Naive thymus-derived CD4-positive, alpha-beta T cell (primary cell): ENCODE measurements at regions of chr1 and their contacts with region 1.

Region 1: GRCh38 chr1:151165738-151166505 is at the starts of genes LYSMD1 and SCNM1:
- DNase-seq: peak; percentile 78 to 98 (median 97)
- ATAC-seq: peak; percentile 98
- H3K4me3 ChIP-seq: peak within 1 kb of the TSS; percentile 97
- H3K4me3 Mint-ChIP-seq: peak within 1 kb of the TSS; percentile 87 to 99 (median 95)
- H3K27ac ChIP-seq: peak within 1 kb of the TSS; percentile 71
- H3K27ac Mint-ChIP-seq: peak within 1 kb of the TSS; percentile 90 to 99 (median 97)
- H3K4me1 ChIP-seq: peaks cover 18 to 19% of the 10 kb centered on the region in 2 donors
- H3K4me1 Mint-ChIP-seq: peaks cover 30 to 70% (median 52%) of the 10 kb centered on the region in 7 donors
- H3K27me3 ChIP-seq: no peaks in the 10 kb centered on the region
- H3K27me3 Mint-ChIP-seq: peaks cover 0 to 3% (median 0%) of the 10 kb centered on the region in 5 donors
- total RNA-seq, gene LYSMD1: 1.4 to 3.3 (median 2.3) TPM
- total RNA-seq, gene SCNM1: 37.1 to 73.1 (median 57.1) TPM

Region 2: GRCh38 chr1:150352866-150353265 is 813.1 kb before region 1 on chr1:
- CTCF ChIA-PET with region 1: no interaction called
- POLR2A ChIA-PET with region 1: no interaction called
- intact Hi-C with region 1: no loop called
- DNase-seq: no peak
- ATAC-seq: no peak
- H3K4me3 ChIP-seq: no peak overlapping the region
- H3K4me3 Mint-ChIP-seq: no peak overlapping the region
- H3K27ac ChIP-seq: no peak overlapping the region
- H3K27ac Mint-ChIP-seq: peak overlapping the region in 3 of 9 donors; percentile 3 to 47 (median 26)
- H3K4me1 ChIP-seq: no peaks in the 10 kb centered on the region
- H3K4me1 Mint-ChIP-seq: no peaks in the 10 kb centered on the region
- H3K27me3 ChIP-seq: no peaks in the 10 kb centered on the region
- H3K27me3 Mint-ChIP-seq: no peaks in the 10 kb centered on the region

Region 3: DNA sequence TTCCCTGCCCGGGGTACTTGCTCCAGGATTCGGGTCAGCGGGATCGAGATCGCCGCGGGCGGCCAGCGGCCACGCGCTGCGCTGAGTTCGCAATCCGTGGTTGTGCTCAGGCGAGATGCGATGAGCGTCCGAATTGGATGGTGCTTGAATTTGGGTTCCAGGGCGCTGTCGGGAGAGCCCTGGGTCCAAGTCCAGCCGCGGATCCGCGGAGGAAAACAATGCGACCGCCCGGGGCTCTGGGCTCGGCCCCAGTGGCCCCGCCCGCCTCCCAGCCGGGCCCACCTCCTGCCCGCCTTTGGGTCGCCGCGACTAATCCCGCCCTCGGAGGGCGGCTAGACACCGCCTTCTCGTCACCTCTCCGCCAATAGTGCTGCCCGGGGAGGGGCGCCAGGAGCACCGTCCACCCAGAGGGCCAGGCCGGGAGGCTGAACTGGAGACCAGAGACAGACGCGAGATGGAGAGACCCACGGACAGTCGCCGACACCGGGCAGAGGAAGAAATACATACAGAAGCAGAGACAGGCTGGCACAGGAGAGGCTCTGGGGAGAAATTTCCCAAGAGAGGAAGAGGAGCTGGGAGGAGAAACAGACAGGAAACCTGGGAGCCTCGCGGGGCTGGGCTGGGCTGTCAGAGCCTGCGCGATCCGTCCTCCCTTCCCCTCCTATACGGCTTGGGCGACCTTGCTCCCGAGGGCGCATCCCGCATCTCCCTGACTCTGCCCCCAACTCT is 19.3 kb before region 1 on chr1 and contains the start of gene SEMA6C:
- CTCF ChIA-PET with region 1: no interaction called
- POLR2A ChIA-PET with region 1: interaction called, 4 read pairs
- intact Hi-C with region 1: loop called in 1 of 2 experiments (anchors 1 kb)
- DNase-seq: peak; percentile 70 to 92 (median 78)
- ATAC-seq: peak; percentile 100
- H3K4me3 ChIP-seq: peak within 1 kb of the TSS; percentile 66
- H3K4me3 Mint-ChIP-seq: peak within 1 kb of the TSS; percentile 91 to 99 (median 98)
- H3K27ac ChIP-seq: peak within 1 kb of the TSS; percentile 67
- H3K27ac Mint-ChIP-seq: peak within 1 kb of the TSS; percentile 66 to 94 (median 87)
- H3K4me1 ChIP-seq: no peaks in the 10 kb centered on the region
- H3K4me1 Mint-ChIP-seq: peaks cover 12 to 24% (median 22%) of the 10 kb centered on the region in 7 donors
- H3K27me3 ChIP-seq: no peaks in the 10 kb centered on the region
- H3K27me3 Mint-ChIP-seq: peaks cover 0 to 23% (median 0%) of the 10 kb centered on the region in 5 donors
- total RNA-seq, gene SEMA6C: 2.5 to 12.4 (median 4.7) TPM

Region 4: DNA sequence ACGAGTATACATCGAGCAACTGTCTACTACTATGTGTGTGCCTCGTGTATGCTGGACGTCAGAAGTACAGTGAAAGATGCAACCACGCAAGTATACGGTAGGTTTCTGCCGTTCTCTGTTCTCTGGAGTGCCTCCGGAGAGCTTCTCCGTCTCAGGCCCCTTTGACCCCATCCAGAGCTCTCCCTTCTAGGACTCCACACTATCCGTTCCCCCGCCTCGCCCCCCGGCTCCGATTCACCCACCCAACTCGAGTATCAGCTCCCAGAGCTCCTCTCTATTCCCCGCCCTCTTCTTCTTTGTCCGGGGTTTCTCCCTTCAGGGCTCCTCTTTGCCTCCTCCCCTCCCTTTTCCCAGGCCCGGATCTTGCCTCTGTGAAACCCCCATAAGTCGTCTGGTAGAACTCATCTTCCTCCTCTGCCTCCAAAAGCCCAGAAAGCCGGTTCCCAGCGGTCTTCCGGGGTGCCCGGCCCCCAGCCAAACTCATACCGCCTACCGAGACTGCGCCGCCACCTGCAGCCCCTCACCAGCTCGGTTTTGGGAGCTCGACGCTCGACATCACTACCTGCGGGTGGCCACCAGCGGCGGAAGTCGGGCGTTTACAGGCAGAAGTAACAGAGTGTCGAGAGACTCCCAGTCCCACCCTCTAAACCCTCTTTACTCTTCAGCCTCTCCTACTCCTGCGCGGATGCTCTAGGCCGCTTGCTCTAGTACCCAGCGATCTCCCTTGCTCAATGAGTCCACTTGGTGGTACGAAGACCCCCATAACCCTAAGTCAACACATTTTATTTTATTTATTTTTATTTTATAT is 23.9 kb after region 1 on chr1 and contains the start of gene VPS72:
- CTCF ChIA-PET with region 1: interaction called, 5 read pairs
- POLR2A ChIA-PET with region 1: interaction called, 33 read pairs
- intact Hi-C with region 1: loop called (anchors 1 kb)
- DNase-seq: peak; percentile 57 to 90 (median 85)
- ATAC-seq: peak; percentile 98
- H3K4me3 ChIP-seq: peak within 1 kb of the TSS; percentile 80
- H3K4me3 Mint-ChIP-seq: peak within 1 kb of the TSS; percentile 91 to 99 (median 98)
- H3K27ac ChIP-seq: peak within 1 kb of the TSS; percentile 78
- H3K27ac Mint-ChIP-seq: peak within 1 kb of the TSS; percentile 91 to 98 (median 97)
- H3K4me1 ChIP-seq: peaks cover 16% of the 10 kb centered on the region in 2 donors
- H3K4me1 Mint-ChIP-seq: peaks cover 23 to 47% (median 35%) of the 10 kb centered on the region in 7 donors
- H3K27me3 ChIP-seq: no peaks in the 10 kb centered on the region
- H3K27me3 Mint-ChIP-seq: peaks cover 0 to 8% (median 0%) of the 10 kb centered on the region in 5 donors
- total RNA-seq, gene VPS72: 35.1 to 82.0 (median 63.9) TPM

Region 5: GRCh38 chr1:151210830-151211229 is 44.9 kb after region 1 on chr1:
- CTCF ChIA-PET with region 1: no interaction called
- POLR2A ChIA-PET with region 1: no interaction called
- intact Hi-C with region 1: no loop called
- DNase-seq: no peak
- ATAC-seq: no peak
- H3K4me3 ChIP-seq: no peak overlapping the region
- H3K4me3 Mint-ChIP-seq: peak overlapping the region in 5 of 10 donors; percentile 11 to 66 (median 45)
- H3K27ac ChIP-seq: peak overlapping the region; percentile 13
- H3K27ac Mint-ChIP-seq: peak overlapping the region in 4 of 9 donors; percentile 4 to 91 (median 57)
- H3K4me1 ChIP-seq: peaks cover 5 to 13% of the 10 kb centered on the region in 2 donors
- H3K4me1 Mint-ChIP-seq: peaks cover 22 to 43% (median 36%) of the 10 kb centered on the region in 7 donors
- H3K27me3 ChIP-seq: no peaks in the 10 kb centered on the region
- H3K27me3 Mint-ChIP-seq: no peaks in the 10 kb centered on the region

Region 6: GRCh38 chr1:151318745-151319374 is 152.9 kb after region 1 on chr1:
- CTCF ChIA-PET with region 1: no interaction called
- POLR2A ChIA-PET with region 1: no interaction called
- intact Hi-C with region 1: no loop called
- DNase-seq: no peak
- ATAC-seq: no peak
- H3K4me3 ChIP-seq: no peak overlapping the region
- H3K4me3 Mint-ChIP-seq: no peak overlapping the region
- H3K27ac ChIP-seq: no peak overlapping the region
- H3K27ac Mint-ChIP-seq: peak overlapping the region in 1 of 9 donors; percentile 18
- H3K4me1 ChIP-seq: peaks cover 0 to 4% of the 10 kb centered on the region in 2 donors
- H3K4me1 Mint-ChIP-seq: peaks cover 14 to 60% (median 50%) of the 10 kb centered on the region in 7 donors
- H3K27me3 ChIP-seq: no peaks in the 10 kb centered on the region
- H3K27me3 Mint-ChIP-seq: no peaks in the 10 kb centered on the region